Activated naive CD8-positive, alpha-beta T cell treated with anti-CD3 and anti-CD28 coated beads, Interleukin-2, amount 10 ng/mL, durations not matched to agents 7 days and 5 days (primary cell): ENCODE measurements at regions of chr5 and their contacts with region 1.

Region 1: DNA sequence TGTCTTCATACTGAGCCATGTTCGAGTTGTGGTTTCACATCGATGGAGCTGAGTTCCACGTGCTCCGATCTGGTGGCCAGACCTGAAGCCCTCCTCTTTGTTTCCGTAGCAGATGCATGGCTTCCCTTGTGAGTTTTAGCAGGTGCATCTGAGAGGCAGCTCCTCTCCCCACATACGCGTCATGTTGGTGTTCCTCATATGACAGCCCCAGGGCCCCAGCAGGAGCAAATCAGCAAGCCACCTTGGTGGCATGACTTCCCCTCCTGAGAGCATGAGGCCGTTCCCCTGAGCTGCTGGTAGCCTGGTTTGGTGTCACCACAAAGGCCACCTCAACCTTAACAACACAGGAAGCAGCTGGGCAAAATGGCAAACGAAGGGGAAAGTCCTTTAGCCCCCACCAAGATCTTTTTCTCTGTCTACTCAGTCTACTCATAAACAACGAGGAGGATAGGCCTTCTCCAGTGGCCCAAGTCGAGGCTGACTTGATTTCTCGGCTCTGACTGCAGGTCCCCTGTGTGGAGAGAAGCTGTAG is 5.9 kb downstream of the CYFIP2 start:
- DNase-seq: peak; percentile 82
- ATAC-seq: peak; percentile 87
- H3K4me3 Mint-ChIP-seq: peak overlapping the region; percentile 93
- H3K27ac Mint-ChIP-seq: peak overlapping the region; percentile 99
- H3K4me1 Mint-ChIP-seq: peaks cover 76% of the 10 kb centered on the region
- H3K27me3 Mint-ChIP-seq: no peaks in the 10 kb centered on the region

Region 2: DNA sequence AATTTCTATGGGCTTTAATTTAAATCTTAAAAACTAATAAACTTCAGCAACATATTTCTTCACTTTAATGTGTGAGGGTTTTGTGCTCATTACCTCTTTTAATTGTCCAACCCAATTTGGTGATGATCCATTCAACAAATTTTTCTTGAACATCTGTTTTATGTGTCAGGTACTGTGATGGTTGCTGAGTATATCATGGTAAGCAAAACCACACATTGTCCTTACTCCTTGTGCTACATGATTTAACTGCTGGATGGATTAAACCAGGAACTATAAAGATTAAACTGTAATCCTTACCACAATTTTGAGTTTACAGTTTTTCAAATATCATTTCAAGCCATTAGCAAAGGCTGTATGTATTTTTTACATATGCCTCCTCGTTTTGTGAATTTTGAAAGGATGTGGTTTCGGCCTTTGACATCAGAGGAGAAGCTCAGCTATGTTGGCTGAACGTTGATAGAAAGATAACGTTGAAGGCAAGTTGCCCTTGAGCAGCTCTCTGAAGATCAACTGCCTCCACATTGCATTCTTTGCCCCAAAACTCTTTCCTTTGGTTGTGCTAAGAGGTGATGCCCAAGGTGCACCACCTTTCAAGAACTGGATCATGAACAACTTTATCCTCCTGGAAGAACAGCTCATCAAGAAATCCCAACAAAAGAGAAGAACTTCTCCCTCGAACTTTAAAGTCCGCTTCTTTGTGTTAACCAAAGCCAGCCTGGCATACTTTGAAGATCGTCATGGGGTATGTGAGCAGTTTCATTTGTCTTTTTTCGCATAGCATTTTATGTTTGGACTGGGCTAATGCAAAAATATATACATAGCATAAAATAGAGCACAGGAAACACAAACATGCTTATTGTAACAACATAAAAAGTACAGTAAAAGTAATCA is 91.2 kb before region 1 on chr5 and contains the start of gene ITK:
- POLR2A ChIA-PET with region 1: interaction called, 22 read pairs
- DNase-seq: no peak
- ATAC-seq: peak; percentile 74
- H3K4me3 Mint-ChIP-seq: peak within 1 kb of the TSS; percentile 96
- H3K27ac Mint-ChIP-seq: peak within 1 kb of the TSS; percentile 99
- H3K4me1 Mint-ChIP-seq: peaks cover 41% of the 10 kb centered on the region
- H3K27me3 Mint-ChIP-seq: no peaks in the 10 kb centered on the region
- total RNA-seq, gene ITK: 313 to 324 TPM

Region 3: GRCh38 chr5:157219491-157220271 is 52.1 kb before region 1 on chr5:
- POLR2A ChIA-PET with region 1: interaction called, 35 read pairs
- DNase-seq: no peak
- ATAC-seq: no peak
- H3K4me3 Mint-ChIP-seq: peak overlapping the region; percentile 66
- H3K27ac Mint-ChIP-seq: peak overlapping the region; percentile 99
- H3K4me1 Mint-ChIP-seq: peaks cover 77% of the 10 kb centered on the region
- H3K27me3 Mint-ChIP-seq: no peaks in the 10 kb centered on the region

Region 4: DNA sequence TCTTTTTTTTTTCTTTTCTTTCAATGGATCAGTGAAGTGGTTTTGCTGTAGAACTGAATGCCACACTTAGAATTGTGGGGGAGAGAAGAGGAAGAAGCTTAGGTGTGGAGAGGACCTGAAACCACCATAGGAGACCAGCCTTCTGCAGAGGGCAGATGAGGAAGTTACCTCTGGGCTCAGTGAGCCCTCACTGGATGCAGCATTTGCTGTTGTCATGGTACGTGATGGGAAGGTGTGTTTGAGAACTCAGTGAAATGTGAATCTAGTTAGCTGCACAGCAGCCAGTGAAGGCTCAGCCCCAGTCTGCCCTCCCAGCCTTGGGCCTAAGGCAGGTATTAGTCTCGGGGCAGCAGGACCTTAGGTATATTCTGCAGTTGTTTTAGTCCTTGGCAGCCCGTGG is 11.6 kb after region 1 on chr5:
- POLR2A ChIA-PET with region 1: interaction called, 51 read pairs
- DNase-seq: no peak
- ATAC-seq: peak; percentile 96
- H3K4me3 Mint-ChIP-seq: peak overlapping the region; percentile 49
- H3K27ac Mint-ChIP-seq: peak overlapping the region; percentile 66
- H3K4me1 Mint-ChIP-seq: peaks cover 65% of the 10 kb centered on the region
- H3K27me3 Mint-ChIP-seq: no peaks in the 10 kb centered on the region

Region 5: DNA sequence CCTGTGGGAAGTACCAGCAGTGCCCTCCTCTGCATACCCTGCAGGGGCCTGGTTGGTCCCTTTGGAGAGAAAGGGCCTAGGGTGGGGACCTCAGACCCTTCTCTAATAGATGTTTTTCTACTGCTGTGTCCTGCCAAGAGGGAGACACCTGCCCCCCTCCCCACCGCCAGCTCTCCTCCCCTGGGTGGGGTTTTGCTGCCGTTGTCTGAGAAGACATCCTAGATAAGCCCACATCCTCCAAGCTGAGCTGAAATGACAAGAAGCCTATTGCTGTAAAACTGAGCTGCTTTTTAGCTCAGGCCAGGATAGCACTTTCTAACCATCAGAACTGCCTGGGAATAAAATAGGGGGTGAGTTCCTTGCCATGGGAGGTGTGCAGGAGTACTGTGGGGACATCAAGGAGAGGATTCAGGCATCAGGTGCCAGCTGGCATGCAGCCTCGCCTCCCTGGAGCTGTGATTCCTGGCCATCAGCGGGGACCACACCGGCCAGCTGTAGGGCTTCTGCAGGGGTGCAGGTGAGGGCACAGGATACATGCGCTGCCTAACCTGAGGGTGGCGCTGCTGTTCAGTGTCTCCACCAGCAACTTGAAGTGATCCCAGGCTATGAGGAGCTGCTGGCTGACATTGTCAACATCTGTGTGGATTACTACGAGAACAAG is 32.0 kb after region 1 on chr5:
- POLR2A ChIA-PET with region 1: interaction called, 21 read pairs
- DNase-seq: peak; percentile 68
- ATAC-seq: peak; percentile 65
- H3K4me3 Mint-ChIP-seq: peak overlapping the region; percentile 62
- H3K27ac Mint-ChIP-seq: peak overlapping the region; percentile 93
- H3K4me1 Mint-ChIP-seq: peaks cover 45% of the 10 kb centered on the region
- H3K27me3 Mint-ChIP-seq: no peaks in the 10 kb centered on the region